Pancreas (tissue), 10 donors: ENCODE measurements at regions of chr7 and their contacts with region 1.

Region 1: DNA sequence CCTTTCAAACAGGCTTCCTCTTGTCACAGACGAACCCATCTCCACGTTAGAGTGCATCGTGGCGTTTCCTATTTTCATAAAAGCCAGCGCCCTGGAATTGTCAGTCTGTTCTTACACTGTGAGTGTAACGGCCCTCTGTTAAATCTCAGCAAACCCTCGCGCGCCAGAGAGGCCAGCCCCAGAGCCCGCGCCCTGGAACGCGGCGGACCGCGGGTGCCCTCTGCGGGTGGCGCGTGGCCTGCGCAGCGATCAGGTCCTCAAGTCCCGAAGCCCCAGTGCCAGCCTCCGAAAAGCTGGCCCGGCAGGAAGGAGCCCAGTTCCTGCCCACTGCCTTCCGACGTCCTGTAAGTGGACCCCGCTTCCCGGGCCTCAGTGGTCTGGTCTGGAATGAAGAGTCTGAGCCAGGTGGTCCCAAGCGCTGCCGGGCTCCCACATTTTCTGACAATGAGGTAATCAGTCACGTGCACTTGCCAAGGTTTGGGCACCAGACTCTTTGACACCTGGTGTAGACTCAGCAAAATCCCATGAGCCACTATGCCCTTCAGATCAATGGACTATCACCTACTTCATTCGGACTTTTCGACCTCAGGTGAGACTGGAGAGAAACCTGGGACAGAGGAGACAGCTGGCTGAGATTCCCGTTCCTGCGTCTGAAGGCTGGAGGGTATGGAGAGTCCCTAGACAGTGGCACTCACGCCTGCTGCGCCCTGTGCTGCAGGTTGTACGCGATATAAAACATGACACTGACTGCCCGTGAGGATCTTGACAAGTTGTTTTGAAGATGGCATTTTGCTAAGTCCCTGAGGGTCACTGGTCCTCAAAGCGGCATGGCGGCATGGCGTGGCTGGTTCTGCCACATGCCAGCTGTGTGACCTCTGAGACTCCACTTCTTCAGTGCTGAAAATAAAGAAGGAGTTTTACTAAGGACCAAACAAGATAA is 109.4 kb upstream of the LANCL2 start:
- DNase-seq: peak; percentile 75 to 92 (median 87)
- ATAC-seq: peak; percentile 91 to 98 (median 94)
- H3K4me3 ChIP-seq: peak overlapping the region; percentile 26 to 77 (median 58)
- H3K27ac ChIP-seq: peak overlapping the region in 3 of 4 donors; percentile 2 to 53 (median 46)
- H3K4me1 ChIP-seq: peaks cover 0 to 3% (median 0%) of the 10 kb centered on the region in 3 donors
- H3K27me3 ChIP-seq: no peaks in the 10 kb centered on the region
- CTCF ChIP-seq: peak; percentile 74 to 83 (median 80)

Region 2: GRCh38 chr7:54773472-54774399 is 482.0 kb before region 1 on chr7:
- intact Hi-C with region 1: loop called in 2 of 3 experiments (anchors 2 to 5 kb)
- DNase-seq: peak; percentile 77 to 91 (median 86)
- ATAC-seq: peak; percentile 98 to 100 (median 100)
- H3K4me3 ChIP-seq: peak overlapping the region in 3 of 4 donors; percentile 11 to 33 (median 31)
- H3K27ac ChIP-seq: peak overlapping the region in 2 of 4 donors; percentile 39 to 53
- H3K4me1 ChIP-seq: peaks cover 0 to 9% (median 0%) of the 10 kb centered on the region in 3 donors
- H3K27me3 ChIP-seq: no peaks in the 10 kb centered on the region
- CTCF ChIP-seq: peak; percentile 67 to 85 (median 74)

Region 3: DNA sequence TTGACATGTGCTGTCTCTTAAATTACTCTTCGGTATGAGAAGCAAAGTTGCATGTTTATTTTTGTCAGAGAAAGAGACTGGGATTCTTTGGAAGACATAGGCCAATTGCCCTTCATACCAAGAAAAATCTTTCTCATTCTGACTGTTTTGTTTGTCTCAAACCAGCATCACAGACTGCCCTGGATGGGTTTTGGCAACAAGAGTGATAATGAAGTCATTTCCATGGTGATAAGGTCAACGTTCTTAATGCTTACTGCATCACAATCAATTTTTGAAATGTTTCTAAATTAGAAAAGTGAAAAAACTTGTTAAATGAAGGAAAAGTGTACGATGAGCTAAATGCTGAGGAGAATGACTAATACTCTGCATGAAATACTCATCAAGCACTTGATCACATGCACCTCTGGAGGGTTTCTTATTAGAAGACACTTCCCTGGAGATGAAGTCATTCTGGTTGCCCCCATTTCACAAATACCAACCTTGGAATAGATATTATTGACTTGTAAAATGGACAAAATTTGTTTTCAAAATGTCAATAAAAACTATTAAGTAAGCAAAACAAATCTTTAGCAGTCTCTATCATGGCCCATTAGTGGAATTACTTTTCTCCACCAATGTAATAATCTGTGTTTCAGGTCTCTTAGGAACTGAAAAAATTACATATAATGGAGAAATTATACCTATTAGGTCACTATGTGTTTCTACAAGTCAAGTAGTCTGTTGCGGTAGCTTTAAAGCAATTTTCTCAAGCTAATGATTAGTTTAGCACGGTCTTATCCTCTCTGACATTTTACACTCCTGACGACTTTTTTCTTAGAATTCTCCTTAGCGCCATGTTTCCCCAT is 476.8 kb before region 1 on chr7:
- intact Hi-C with region 1: loop called (anchors 2 to 10 kb)
- DNase-seq: no peak
- ATAC-seq: no peak
- H3K4me3 ChIP-seq: no peak overlapping the region
- H3K27ac ChIP-seq: no peak overlapping the region
- H3K4me1 ChIP-seq: no peaks in the 10 kb centered on the region
- H3K27me3 ChIP-seq: no peaks in the 10 kb centered on the region
- CTCF ChIP-seq: no peak

Region 4: GRCh38 chr7:54788664-54789063 is 467.1 kb before region 1 on chr7:
- intact Hi-C with region 1: loop called in 2 of 3 experiments (anchors 5 to 10 kb)
- DNase-seq: peak in 2 of 6 donors; percentile 18 to 38
- ATAC-seq: peak; percentile 71 to 94 (median 92)
- H3K4me3 ChIP-seq: no peak overlapping the region
- H3K27ac ChIP-seq: no peak overlapping the region
- H3K4me1 ChIP-seq: no peaks in the 10 kb centered on the region
- H3K27me3 ChIP-seq: no peaks in the 10 kb centered on the region
- CTCF ChIP-seq: peak in 3 of 4 donors; percentile 29 to 51 (median 42)